Activated CD8-positive, alpha-beta memory T cell treated with anti-CD3 and anti-CD28 coated beads, Interleukin-2, amount 10 ng/mL, durations not matched to agents 7 days and 5 days (primary cell): ENCODE measurements at regions of chr9 and their contacts with region 1.

Region 1: GRCh38 chr9:77166193-77166592 is 11.1 kb upstream of the VPS13A start:
- DNase-seq: no peak
- ATAC-seq: no peak
- H3K4me3 Mint-ChIP-seq: no peak overlapping the region
- H3K27ac Mint-ChIP-seq: no peak overlapping the region
- H3K4me1 Mint-ChIP-seq: peaks cover 2% of the 10 kb centered on the region
- H3K27me3 Mint-ChIP-seq: peaks cover 6% of the 10 kb centered on the region

Region 2: GRCh38 chr9:77142366-77142765 is 23.8 kb before region 1 on chr9:
- CTCF ChIA-PET with region 1: no interaction called
- DNase-seq: no peak
- ATAC-seq: no peak
- H3K4me3 Mint-ChIP-seq: no peak overlapping the region
- H3K27ac Mint-ChIP-seq: no peak overlapping the region
- H3K4me1 Mint-ChIP-seq: no peaks in the 10 kb centered on the region
- H3K27me3 Mint-ChIP-seq: peaks cover 10% of the 10 kb centered on the region

Region 3: GRCh38 chr9:77177161-77177893 is 11.1 kb after region 1 on chr9 and contains the start of gene VPS13A:
- CTCF ChIA-PET with region 1: interaction called, 23 read pairs
- DNase-seq: peak; percentile 98
- ATAC-seq: peak; percentile 89
- H3K4me3 Mint-ChIP-seq: peak within 1 kb of the TSS; percentile 97
- H3K27ac Mint-ChIP-seq: peak within 1 kb of the TSS; percentile 94
- H3K4me1 Mint-ChIP-seq: peaks cover 25% of the 10 kb centered on the region
- H3K27me3 Mint-ChIP-seq: peaks cover 2% of the 10 kb centered on the region
- total RNA-seq, gene VPS13A: 43.6 to 53.8 TPM

Region 4: GRCh38 chr9:77433675-77434445 is 267.7 kb after region 1 on chr9:
- CTCF ChIA-PET with region 1: interaction called, 13 read pairs
- DNase-seq: peak; percentile 65
- ATAC-seq: peak; percentile 91
- H3K4me3 Mint-ChIP-seq: no peak overlapping the region
- H3K27ac Mint-ChIP-seq: no peak overlapping the region
- H3K4me1 Mint-ChIP-seq: peaks cover 4% of the 10 kb centered on the region
- H3K27me3 Mint-ChIP-seq: peaks cover 6% of the 10 kb centered on the region